ENCODE measurements at regions of chr1 and their contacts with region 1.

Region 1: DNA sequence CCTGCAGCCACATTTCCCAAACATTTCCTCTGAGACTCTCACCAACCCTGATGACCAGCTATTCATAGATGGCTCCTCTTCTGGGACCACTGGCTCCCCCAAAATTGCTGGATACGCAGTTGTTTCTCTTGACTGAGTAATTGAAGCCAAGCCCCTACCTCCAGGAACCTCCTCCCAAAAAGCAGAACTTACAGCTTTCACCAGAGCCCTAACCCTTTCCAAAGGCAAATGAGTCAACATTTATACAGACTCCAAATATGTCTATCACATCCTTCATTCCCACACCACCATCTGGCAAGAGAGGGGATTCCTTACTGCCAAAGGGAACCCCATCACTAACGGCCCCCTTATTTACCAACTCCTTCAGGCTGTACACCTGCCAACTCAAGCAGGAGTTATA is 20.3 kb upstream of the CA6 start:
- DNase-seq: no peak
- ATAC-seq: no peak
- H3K4me3 ChIP-seq: no peak overlapping the region
- H3K4me1 ChIP-seq: no peaks in the 10 kb centered on the region
- CTCF ChIP-seq: no peak

Region 2: DNA sequence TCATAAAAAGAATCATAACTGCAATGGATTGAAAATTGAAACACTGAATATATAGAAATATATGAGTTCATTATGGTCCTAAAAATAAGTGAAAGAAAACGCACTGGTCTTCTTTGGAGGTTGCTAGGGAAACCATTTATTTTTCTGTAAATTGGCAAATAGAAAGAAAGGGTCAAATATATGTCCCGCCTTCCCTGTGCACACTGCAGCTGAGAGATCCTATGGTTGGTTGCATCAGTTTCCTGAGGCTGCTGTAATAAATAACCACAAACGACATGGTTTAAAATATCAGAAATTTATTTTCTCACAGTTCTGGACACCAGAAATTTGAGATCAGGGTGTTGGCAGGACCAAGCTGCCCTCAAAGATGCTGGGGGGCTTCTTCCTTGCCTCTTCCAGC is 55.2 kb after region 1 on chr1:
- intact Hi-C with region 1: loop called (anchors 5 to 10 kb)
- DNase-seq: no peak
- ATAC-seq: no peak
- H3K4me3 ChIP-seq: no peak overlapping the region
- H3K4me1 ChIP-seq: no peaks in the 10 kb centered on the region
- CTCF ChIP-seq: no peak

Region 3: GRCh38 chr1:8987881-8988617 is 62.6 kb after region 1 on chr1:
- intact Hi-C with region 1: loop called (anchors 5 to 10 kb)
- DNase-seq: peak in 2 of 3 donors; percentile 69 to 72
- ATAC-seq: peak; percentile 66
- H3K4me3 ChIP-seq: no peak overlapping the region
- H3K4me1 ChIP-seq: peaks cover 3% of the 10 kb centered on the region
- CTCF ChIP-seq: peak; percentile 83

Region 4: DNA sequence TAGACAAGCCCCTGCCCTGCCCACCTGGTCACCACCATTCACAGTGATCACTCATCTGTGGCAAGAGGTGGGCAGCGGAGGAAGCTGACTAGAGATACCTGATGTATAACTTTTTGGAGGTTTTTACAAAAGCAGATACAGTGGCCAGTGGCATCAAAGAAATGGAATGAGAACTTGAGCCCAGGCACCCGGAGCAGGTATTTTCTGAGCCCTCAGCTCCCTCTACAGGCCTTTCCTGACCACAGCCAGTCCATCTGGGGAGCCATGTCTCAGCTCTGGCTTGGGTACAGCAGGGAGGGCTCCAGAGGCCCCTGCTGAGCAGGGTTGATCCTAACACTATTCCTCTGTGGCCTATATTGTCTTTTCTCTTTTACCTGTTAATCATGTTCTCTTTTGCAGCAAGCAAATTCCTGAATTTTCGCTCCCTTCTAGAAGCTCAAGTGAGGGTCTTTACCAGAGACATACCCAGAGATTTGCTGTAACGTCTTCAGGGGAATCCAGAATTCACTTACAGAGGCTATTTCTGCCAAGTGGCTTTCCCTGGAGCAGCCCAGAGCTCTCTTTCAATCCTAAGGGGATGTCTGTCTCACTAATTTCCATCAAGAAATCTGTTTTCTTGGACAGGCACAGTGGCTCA is 176.2 kb after region 1 on chr1:
- intact Hi-C with region 1: loop called in 1 of 2 experiments (anchors 5 kb)
- DNase-seq: peak; percentile 39 to 68 (median 55)
- ATAC-seq: peak; percentile 83
- H3K4me3 ChIP-seq: no peak overlapping the region
- H3K4me1 ChIP-seq: no peaks in the 10 kb centered on the region
- CTCF ChIP-seq: peak; percentile 39